ENCODE measurements at regions of chr20 and their contacts with region 1.

Region 1: GRCh38 chr20:37282556-37282955 is 6.9 kb upstream of the MANBAL start:
- DNase-seq: peak; percentile 55
- H3K4me3 ChIP-seq: no peak overlapping the region
- H3K27ac ChIP-seq: no peak overlapping the region
- H3K4me1 ChIP-seq: peaks cover 7% of the 10 kb centered on the region
- H3K27me3 ChIP-seq: no peaks in the 10 kb centered on the region
- CTCF ChIP-seq: peak; percentile 62 to 80

Region 2: DNA sequence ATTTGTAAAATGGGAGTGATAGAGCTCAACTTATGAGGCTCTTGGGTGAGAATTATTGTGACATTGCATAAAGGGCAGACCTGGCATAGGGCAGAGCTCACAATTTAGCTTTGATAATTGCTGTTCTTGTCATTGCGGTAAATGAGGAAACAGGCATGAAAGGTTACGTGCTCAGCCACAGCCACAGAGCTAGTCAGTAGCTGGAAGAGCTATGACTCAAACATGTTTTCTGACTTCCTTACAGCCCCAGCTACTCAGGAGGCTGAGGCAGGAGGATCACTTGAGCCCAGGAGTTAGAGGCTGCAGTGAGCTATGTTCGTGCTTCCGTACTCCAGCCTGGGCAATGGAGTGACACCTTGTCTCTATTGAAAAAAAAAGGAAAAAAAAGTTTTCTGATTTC is 17.4 kb before region 1 on chr20:
- CTCF ChIA-PET with region 1: interaction called, 10 read pairs
- dilution Hi-C with region 1: no loop called
- in situ Hi-C with region 1: no loop called
- intact Hi-C with region 1: no loop called
- DNase-seq: no peak
- H3K4me3 ChIP-seq: no peak overlapping the region
- H3K27ac ChIP-seq: no peak overlapping the region
- H3K4me1 ChIP-seq: peaks cover 4% of the 10 kb centered on the region
- H3K27me3 ChIP-seq: peaks cover 3% of the 10 kb centered on the region
- CTCF ChIP-seq: no peak

Region 3: DNA sequence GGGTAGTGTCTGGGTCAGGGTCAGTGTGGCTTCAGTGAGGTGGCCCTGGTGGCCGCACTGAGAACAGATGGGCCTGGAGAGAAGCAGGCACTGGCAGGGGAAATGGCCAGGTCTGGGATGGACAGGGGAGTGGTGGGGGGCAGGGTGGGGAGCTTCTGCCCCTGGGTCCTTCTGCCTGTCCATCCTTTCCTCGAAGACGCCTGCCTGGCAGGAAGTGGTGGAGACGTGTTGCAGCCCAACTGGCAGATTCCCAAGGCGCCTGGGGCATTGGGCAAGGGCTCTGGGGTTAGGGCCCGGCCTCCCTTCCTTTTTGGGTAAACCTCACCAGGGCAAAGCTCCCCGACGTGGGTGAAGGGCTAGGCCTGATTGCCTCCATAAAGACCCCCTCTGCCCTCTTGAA is 73.8 kb after region 1 on chr20:
- CTCF ChIA-PET with region 1: no interaction called
- dilution Hi-C with region 1: no loop called
- in situ Hi-C with region 1: loop called in 1 of 2 experiments (anchors 10 kb)
- intact Hi-C with region 1: no loop called
- DNase-seq: peak; percentile 59
- H3K4me3 ChIP-seq: no peak overlapping the region
- H3K27ac ChIP-seq: no peak overlapping the region
- H3K4me1 ChIP-seq: peaks cover 48% of the 10 kb centered on the region
- H3K27me3 ChIP-seq: no peaks in the 10 kb centered on the region
- CTCF ChIP-seq: peak in 1 of 2 donors; percentile 4

Region 4: DNA sequence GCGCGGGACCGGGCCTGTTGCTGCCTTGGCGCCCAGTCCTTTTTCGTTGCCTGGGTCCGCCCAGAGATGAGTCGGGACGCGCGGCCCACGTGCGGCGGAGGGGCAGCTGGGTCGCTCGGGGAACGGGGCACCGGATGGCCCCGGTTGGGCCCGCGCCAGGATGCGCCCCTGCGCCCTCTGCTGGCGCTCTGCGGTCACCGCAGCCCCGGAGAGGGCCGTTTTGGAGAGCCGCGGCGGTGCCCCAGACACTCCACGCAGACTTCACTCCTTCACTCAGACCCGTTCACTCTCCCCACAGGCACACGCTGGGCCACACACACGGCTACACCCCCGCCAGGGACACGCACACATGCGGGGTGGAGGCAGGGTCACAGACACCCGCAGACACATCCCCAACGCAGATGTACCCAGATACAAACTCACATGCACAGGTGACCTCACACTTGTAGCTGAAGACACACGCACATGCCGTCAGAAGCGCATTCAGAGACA is 102.2 kb after region 1 on chr20:
- CTCF ChIA-PET with region 1: no interaction called
- dilution Hi-C with region 1: no loop called
- in situ Hi-C with region 1: loop called in 1 of 2 experiments (anchors 10 kb)
- intact Hi-C with region 1: loop called (anchors 1 kb)
- DNase-seq: peak; percentile 30
- H3K4me3 ChIP-seq: no peak overlapping the region
- H3K27ac ChIP-seq: no peak overlapping the region
- H3K4me1 ChIP-seq: peaks cover 8% of the 10 kb centered on the region
- H3K27me3 ChIP-seq: no peaks in the 10 kb centered on the region
- CTCF ChIP-seq: peak; percentile 56 to 92